ENCODE measurements at regions of chr11 and their contacts with region 1.

Region 1: DNA sequence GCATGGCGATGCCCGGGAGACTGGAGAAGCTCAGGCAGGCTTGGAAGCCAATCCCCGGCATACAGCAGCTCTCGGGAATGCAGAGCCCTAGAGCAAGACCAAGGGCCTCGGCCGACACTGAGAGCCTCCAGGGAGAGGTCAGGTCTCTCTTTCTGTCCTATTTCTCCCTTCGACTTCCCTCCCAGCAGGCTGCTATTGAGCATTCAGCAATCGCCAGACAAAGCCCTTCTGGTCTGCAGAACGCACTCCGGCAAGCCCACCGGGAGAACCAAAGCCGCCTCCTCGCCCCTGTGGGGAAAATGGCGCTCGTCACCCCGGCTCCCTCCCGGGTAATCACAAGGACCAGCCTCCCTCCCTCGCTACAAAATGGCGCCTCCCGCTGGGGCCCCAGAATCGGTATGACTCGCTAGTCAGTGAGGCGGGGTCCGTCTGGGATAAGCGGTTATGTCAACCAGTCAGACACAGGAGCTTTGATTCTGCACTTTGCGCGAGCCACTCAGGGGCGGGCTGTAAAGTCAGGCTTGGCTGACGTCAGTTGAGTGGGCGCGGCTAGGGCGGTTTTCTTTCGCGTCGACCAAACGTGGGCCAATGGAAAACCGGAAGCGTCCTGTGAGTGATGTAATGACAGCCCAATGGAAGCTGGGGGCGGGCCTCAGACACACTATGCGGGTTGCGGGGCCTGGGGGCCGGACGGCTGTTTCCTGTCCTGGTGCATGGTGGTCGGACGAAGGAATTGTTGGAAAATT is at the start of gene ZNF143:
- DNase-seq: peak; percentile 95 to 100 (median 100)
- ATAC-seq: peak; percentile 85 to 89
- H3K4me3 Mint-ChIP-seq: peak within 1 kb of the TSS; percentile 88 to 99 (median 96)
- H3K27ac Mint-ChIP-seq: peak within 1 kb of the TSS; percentile 91 to 99 (median 98)
- H3K4me1 Mint-ChIP-seq: peaks cover 9 to 34% (median 33%) of the 10 kb centered on the region in 4 donors
- H3K27me3 Mint-ChIP-seq: peaks cover 0 to 1% (median 0%) of the 10 kb centered on the region in 5 donors
- polyA plus RNA-seq, gene ZNF143: 28.1 to 38.5 (median 32.9) TPM

Region 2: GRCh38 chr11:8682303-8683114 is 778.0 kb before region 1 on chr11 and contains the starts of genes RPL27A and TRIM66:
- POLR2A ChIA-PET with region 1: interaction called, 12 read pairs
- DNase-seq: peak; percentile 97 to 99 (median 99)
- ATAC-seq: peak; percentile 93 to 95
- H3K4me3 Mint-ChIP-seq: peak within 1 kb of the TSS; percentile 86 to 97 (median 95)
- H3K27ac Mint-ChIP-seq: peak within 1 kb of the TSS; percentile 96 to 99 (median 98)
- H3K4me1 Mint-ChIP-seq: peaks cover 25 to 52% (median 44%) of the 10 kb centered on the region in 4 donors
- H3K27me3 Mint-ChIP-seq: no peaks in the 10 kb centered on the region
- polyA plus RNA-seq, gene RPL27A: 4,481 to 4,848 (median 4,520) TPM
- polyA plus RNA-seq, gene TRIM66: 0.14 to 0.53 (median 0.18) TPM

Region 3: GRCh38 chr11:8989453-8989852 is 471.0 kb before region 1 on chr11:
- POLR2A ChIA-PET with region 1: no interaction called
- DNase-seq: no peak
- ATAC-seq: no peak
- H3K4me3 Mint-ChIP-seq: no peak overlapping the region
- H3K27ac Mint-ChIP-seq: peak overlapping the region in 1 of 10 donors; percentile 2
- H3K4me1 Mint-ChIP-seq: no peaks in the 10 kb centered on the region
- H3K27me3 Mint-ChIP-seq: peaks cover 6 to 22% (median 10%) of the 10 kb centered on the region in 5 donors

Region 4: GRCh38 chr11:9066433-9066925 is 394.0 kb before region 1 on chr11:
- POLR2A ChIA-PET with region 1: no interaction called
- DNase-seq: no peak
- ATAC-seq: no peak
- H3K4me3 Mint-ChIP-seq: no peak overlapping the region
- H3K27ac Mint-ChIP-seq: no peak overlapping the region
- H3K4me1 Mint-ChIP-seq: no peaks in the 10 kb centered on the region
- H3K27me3 Mint-ChIP-seq: peaks cover 0 to 8% (median 1%) of the 10 kb centered on the region in 5 donors

Region 5: GRCh38 chr11:9265211-9266131 is 195.0 kb before region 1 on chr11 and contains the start of gene DENND5A:
- POLR2A ChIA-PET with region 1: interaction called, 17 read pairs
- DNase-seq: peak; percentile 17 to 76 (median 42)
- ATAC-seq: peak; percentile 58 to 63
- H3K4me3 Mint-ChIP-seq: peak within 1 kb of the TSS; percentile 87 to 100 (median 97)
- H3K27ac Mint-ChIP-seq: peak within 1 kb of the TSS; percentile 51 to 98 (median 94)
- H3K4me1 Mint-ChIP-seq: peaks cover 25 to 43% (median 37%) of the 10 kb centered on the region in 4 donors
- H3K27me3 Mint-ChIP-seq: peaks cover 0 to 1% (median 0%) of the 10 kb centered on the region in 5 donors
- polyA plus RNA-seq, gene DENND5A: 26.4 to 65.3 (median 33.5) TPM

Region 6: GRCh38 chr11:9363954-9364912 is 96.3 kb before region 1 on chr11:
- POLR2A ChIA-PET with region 1: interaction called, 10 read pairs
- DNase-seq: peak; percentile 50 to 80 (median 62)
- ATAC-seq: peak; percentile 91 to 95
- H3K4me3 Mint-ChIP-seq: peak overlapping the region; percentile 80 to 91 (median 84)
- H3K27ac Mint-ChIP-seq: peak overlapping the region; percentile 78 to 94 (median 88)
- H3K4me1 Mint-ChIP-seq: peaks cover 0 to 31% (median 9%) of the 10 kb centered on the region in 4 donors
- H3K27me3 Mint-ChIP-seq: no peaks in the 10 kb centered on the region

Region 7: GRCh38 chr11:9448576-9449352 is 11.7 kb before region 1 on chr11:
- POLR2A ChIA-PET with region 1: interaction called, 13 read pairs
- DNase-seq: no peak
- ATAC-seq: no peak
- H3K4me3 Mint-ChIP-seq: no peak overlapping the region
- H3K27ac Mint-ChIP-seq: peak overlapping the region in 2 of 10 donors; percentile 14 to 24
- H3K4me1 Mint-ChIP-seq: peaks cover 0 to 6% (median 6%) of the 10 kb centered on the region in 4 donors
- H3K27me3 Mint-ChIP-seq: no peaks in the 10 kb centered on the region